PC-9 (cell line): ENCODE measurements at regions of chr5 and their contacts with region 1.

Region 1: GRCh38 chr5:53494498-53494897 is 14.1 kb downstream of the FST start:
- DNase-seq: no peak
- H3K4me3 ChIP-seq: no peak overlapping the region
- H3K27ac ChIP-seq: no peak overlapping the region
- H3K4me1 ChIP-seq: no peaks in the 10 kb centered on the region
- H3K27me3 ChIP-seq: no peaks in the 10 kb centered on the region
- CTCF ChIP-seq: no peak

Region 2: DNA sequence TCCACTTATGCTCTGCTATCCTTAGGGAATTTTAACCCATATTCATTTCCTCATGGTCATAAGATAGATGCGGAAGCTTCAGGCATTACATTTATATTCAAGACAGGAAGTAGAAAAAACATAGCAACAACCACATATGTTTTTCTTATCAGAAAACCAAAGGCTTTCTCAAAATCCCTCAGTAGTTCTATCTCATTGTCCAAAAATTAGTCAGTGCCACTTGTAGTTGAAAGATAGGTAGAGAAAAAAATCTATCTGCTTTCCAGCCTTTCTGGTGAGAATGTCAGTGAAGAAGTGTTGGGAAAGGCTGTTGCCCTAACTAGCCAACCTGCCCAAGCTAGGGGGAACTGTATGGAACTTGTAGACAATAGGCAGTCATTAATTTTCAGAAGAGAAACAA is 361.5 kb before region 1 on chr5:
- CTCF ChIA-PET with region 1: no interaction called
- POLR2A ChIA-PET with region 1: interaction called, 11 read pairs
- intact Hi-C with region 1: no loop called
- DNase-seq: no peak
- H3K4me3 ChIP-seq: no peak overlapping the region
- H3K27ac ChIP-seq: no peak overlapping the region
- H3K4me1 ChIP-seq: no peaks in the 10 kb centered on the region
- H3K27me3 ChIP-seq: no peaks in the 10 kb centered on the region
- CTCF ChIP-seq: no peak

Region 3: GRCh38 chr5:53481887-53482716 is 12.4 kb before region 1 on chr5:
- CTCF ChIA-PET with region 1: no interaction called
- POLR2A ChIA-PET with region 1: no interaction called
- intact Hi-C with region 1: no loop called
- DNase-seq: peak; percentile 66 to 69
- H3K4me3 ChIP-seq: peak overlapping the region; percentile 87
- H3K27ac ChIP-seq: no peak overlapping the region
- H3K4me1 ChIP-seq: peaks cover 3% of the 10 kb centered on the region
- H3K27me3 ChIP-seq: peaks cover 11% of the 10 kb centered on the region; the same call in 1 of the 2 replicates
- CTCF ChIP-seq: no peak